ENCODE measurements at regions of chr2 and their contacts with region 1.

Region 1: DNA sequence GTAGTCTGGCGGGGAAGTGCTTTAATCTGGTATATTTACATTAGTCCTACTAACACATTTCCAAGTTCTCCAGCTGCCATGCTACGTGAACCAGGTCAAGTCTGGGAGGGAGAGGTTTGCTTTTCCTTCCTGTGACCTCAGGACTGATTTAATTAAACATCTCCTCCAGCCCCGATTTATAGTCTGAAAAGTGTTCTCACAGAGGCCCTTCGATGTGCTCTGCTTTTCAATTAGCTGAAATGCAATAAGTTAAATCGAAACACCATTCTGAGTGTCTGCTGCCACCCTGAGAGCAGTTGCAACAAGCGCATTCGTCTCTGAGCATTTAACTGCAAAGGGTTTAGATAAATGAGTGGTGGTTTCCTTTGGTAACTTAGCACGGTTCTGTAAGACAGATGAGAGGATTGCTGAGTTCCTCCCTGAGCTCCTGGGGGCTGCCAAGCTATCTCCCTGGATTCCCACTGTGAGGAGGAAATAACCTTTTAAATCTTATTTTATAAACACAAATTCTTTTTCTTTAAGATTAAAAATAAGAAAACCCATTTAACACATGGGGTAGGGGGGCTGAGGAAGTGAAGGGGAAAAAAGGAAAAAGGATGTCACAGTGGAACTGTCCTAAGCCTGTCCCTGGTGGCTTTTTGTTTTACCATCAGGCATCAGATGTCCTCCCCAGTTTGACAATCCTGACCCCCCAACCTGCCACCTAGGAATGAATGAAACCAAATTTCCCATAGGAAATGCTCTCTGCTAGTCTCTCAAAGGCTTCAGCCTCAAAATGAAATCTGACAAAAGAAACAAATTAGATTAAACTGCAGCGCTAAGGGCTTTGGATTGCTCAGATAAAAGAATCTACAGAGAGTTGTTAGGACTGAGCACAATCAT is 56.5 kb upstream of the CREB1 start:
- DNase-seq: no peak
- H3K4me3 ChIP-seq: no peak overlapping the region
- H3K27ac ChIP-seq: peak overlapping the region in 2 of 4 donors; percentile 2 to 7
- H3K4me1 ChIP-seq: peaks cover 0 to 17% (median 9%) of the 10 kb centered on the region in 4 donors
- H3K27me3 ChIP-seq: no peaks in the 10 kb centered on the region
- CTCF ChIP-seq: peak; percentile 30 to 46 (median 34)
- EP300 ChIP-seq: no peak
- POLR2A ChIP-seq: no peak

Region 2: DNA sequence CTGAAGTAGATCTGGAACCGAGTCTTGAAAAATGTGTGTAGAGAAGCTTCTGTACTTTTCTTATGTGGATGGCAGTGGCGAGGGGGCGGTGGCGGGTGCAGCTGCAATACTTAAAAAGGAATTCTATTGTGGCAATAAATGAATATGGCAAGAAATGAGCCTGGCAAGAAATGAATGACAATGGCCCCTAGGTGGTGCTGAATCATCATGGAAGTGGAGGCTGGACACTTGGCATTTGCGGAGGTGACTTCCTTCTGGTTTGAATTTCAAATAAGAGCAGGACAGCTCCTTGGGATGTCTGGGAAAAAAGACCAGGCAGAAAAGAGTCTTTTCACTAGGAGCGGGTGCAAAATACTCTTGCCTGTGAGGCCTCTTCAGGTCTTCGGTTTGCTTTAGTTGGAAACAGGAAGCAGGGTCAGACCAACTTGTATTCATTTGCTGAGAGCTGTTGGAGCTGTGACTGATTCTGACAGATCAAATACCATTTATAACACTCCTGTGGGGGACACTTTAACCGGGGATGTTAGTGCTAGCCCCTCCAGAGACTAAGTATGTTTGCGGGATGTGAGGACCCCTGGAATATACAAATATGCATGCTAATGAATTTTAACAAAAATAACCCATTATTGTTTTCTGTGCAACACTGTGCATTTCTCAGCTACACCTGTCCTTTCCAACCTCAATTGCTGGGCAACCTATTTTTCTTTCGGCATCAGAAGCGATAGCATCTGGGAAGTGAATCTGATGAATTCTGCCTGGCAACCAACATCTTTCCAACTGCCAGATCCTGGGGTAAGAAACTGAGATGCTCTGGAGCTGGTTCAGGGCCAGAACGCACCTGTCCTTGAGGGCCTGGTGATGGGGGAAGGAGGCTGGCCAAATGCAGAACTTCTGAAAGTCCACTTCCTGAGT is 672.5 kb before region 1 on chr2:
- in situ Hi-C with region 1: loop called (anchors 5 to 10 kb)
- intact Hi-C with region 1: loop called (anchors 5 kb)
- DNase-seq: peak; percentile 57
- H3K4me3 ChIP-seq: no peak overlapping the region
- H3K27ac ChIP-seq: no peak overlapping the region
- H3K4me1 ChIP-seq: peaks cover 0 to 9% (median 5%) of the 10 kb centered on the region in 4 donors
- H3K27me3 ChIP-seq: no peaks in the 10 kb centered on the region
- CTCF ChIP-seq: peak; percentile 56 to 74 (median 67)
- EP300 ChIP-seq: no peak
- POLR2A ChIP-seq: no peak

Region 3: DNA sequence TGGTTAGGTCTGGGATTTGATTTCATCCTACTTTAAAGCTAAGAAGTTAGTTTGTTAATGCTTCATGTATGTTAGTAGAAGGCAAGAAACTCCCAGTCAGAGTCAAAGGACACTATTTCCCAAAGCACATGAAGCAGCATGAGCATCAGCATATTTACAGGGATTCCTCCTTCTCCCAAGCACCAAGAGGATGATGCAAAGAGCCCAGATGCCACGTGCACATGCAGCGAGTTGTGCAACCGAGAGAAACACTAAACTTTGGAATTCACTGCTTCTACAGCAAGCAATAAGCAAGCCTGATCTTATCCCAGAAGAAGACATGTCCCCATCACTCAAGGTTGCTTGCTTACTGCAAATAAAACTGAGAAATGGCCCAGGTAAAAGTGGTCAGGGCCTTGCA is 501.5 kb before region 1 on chr2:
- in situ Hi-C with region 1: loop called in 1 of 4 experiments (anchors 10 kb)
- intact Hi-C with region 1: no loop called
- DNase-seq: peak; percentile 13
- H3K4me3 ChIP-seq: no peak overlapping the region
- H3K27ac ChIP-seq: no peak overlapping the region
- H3K4me1 ChIP-seq: no peaks in the 10 kb centered on the region
- H3K27me3 ChIP-seq: no peaks in the 10 kb centered on the region
- CTCF ChIP-seq: no peak
- EP300 ChIP-seq: no peak
- POLR2A ChIP-seq: no peak

Region 4: DNA sequence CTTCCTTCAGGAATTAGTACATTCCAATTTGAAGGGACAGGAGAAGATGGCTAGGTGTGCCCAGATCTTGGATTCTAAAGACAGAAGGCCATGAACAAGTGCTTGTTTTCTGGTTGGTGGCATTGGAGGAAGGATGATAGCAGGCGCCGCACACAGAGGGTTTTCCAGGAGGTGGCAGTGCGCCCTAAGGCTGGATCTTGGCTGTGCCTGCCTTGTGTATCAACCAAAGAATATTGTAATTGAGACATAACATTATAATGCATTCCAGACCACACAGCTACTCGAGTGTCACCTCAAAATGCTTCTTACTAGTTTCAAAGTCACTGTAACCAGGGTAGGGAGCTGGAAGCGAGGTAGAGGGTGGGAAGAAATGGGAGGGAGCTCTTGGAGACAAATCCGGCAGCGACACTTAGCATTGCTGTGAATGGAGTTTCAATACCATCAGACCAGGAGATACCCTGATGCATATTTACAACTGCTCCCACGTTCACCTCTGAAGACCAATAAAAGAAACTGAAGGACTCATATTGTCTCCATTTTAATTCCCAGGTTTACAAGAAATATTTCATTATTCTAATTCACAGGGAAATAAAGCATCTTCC is 491.4 kb before region 1 on chr2:
- in situ Hi-C with region 1: loop called (anchors 5 to 10 kb)
- intact Hi-C with region 1: loop called (anchors 1 kb)
- DNase-seq: peak; percentile 47
- H3K4me3 ChIP-seq: no peak overlapping the region
- H3K27ac ChIP-seq: no peak overlapping the region
- H3K4me1 ChIP-seq: peaks cover 0 to 16% (median 0%) of the 10 kb centered on the region in 4 donors
- H3K27me3 ChIP-seq: no peaks in the 10 kb centered on the region
- CTCF ChIP-seq: peak; percentile 52 to 65 (median 57)
- EP300 ChIP-seq: no peak
- POLR2A ChIP-seq: no peak